ENCODE measurements at regions of chr6 and their contacts with region 1.

Region 1: DNA sequence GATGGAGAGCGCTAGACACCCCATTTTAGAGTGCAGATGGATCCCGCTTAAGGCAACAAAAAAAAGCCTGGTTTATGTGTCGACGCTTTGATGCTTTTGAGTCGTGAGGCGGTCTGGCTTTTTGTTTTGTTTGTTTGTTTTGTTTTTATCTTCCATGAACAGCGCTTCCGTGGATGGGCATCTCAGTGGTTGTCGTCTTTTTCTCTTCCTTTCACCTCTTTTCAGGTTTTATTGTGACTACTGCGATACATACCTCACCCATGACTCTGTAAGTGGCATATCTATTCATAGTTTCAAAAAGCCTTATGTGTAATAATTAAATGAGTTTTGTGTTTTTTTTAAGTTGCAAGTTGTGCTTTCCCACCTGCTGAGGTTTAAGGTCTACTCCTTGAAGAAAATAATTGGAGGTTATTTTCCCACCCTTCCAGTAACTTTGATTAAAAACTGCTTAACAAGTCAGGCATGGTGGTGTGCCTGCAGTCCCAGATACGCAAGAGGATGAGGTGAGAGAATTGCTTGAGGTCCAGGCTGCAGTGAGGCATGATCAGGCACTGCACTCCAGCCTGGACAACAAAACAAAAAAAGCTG is 476 bp downstream of the SNRPC start:
- DNase-seq: no peak
- H3K4me3 Mint-ChIP-seq: no peak overlapping the region
- H3K27ac Mint-ChIP-seq: no peak overlapping the region
- H3K4me1 Mint-ChIP-seq: peaks cover 7% of the 10 kb centered on the region
- H3K27me3 Mint-ChIP-seq: no peaks in the 10 kb centered on the region

Region 2: DNA sequence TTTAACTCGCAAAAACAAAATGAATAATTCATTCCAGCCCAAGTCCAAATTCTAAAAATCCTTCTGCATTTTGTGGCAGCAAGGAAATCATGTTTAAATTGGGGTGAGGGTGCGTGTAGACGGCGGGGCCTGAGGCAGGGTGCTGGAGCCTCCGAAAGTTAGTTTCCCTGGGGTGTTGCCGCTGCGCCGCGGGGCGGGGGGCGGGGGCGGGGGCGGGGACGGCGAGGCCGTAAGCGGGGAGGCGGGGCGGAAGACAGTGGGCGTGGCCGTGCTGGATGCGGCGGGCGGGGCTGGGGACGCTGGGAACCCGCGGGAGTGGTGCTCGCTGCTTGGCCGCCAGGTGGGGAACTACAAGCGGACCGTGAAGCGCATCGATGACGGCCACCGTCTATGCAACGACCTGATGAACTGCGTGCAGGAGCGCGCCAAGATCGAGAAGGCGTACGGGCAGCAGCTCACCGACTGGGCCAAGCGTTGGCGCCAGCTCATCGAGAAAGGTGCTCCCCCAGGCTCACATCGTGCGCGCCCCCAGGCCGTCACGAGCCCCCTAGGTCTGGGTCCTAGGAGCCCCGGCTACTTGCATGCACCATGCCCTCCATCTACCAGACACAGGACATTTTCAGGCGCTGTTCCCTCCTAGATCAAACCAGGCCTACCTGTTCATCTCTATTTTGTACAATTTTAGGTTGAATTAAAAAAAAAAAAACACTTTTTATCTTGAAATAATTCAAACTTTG is 230.6 kb before region 1 on chr6:
- intact Hi-C with region 1: loop called (anchors 1 kb)
- DNase-seq: peak; percentile 91
- H3K4me3 Mint-ChIP-seq: peak overlapping the region; percentile 6
- H3K27ac Mint-ChIP-seq: no peak overlapping the region
- H3K4me1 Mint-ChIP-seq: no peaks in the 10 kb centered on the region
- H3K27me3 Mint-ChIP-seq: peaks cover 6% of the 10 kb centered on the region

Region 3: GRCh38 chr6:34671801-34672656 is 85.8 kb before region 1 on chr6:
- intact Hi-C with region 1: loop called (anchors 2 kb)
- DNase-seq: peak; percentile 80
- H3K4me3 Mint-ChIP-seq: peak overlapping the region; percentile 69
- H3K27ac Mint-ChIP-seq: peak overlapping the region; percentile 97
- H3K4me1 Mint-ChIP-seq: peaks cover 63% of the 10 kb centered on the region
- H3K27me3 Mint-ChIP-seq: no peaks in the 10 kb centered on the region

Region 4: GRCh38 chr6:34791701-34792235 is 34.0 kb after region 1 on chr6 and contains the start of gene BLTP3A:
- intact Hi-C with region 1: loop called (anchors 1 kb)
- DNase-seq: peak; percentile 76
- H3K4me3 Mint-ChIP-seq: peak within 1 kb of the TSS; percentile 99
- H3K27ac Mint-ChIP-seq: peak within 1 kb of the TSS; percentile 97
- H3K4me1 Mint-ChIP-seq: peaks cover 29% of the 10 kb centered on the region
- H3K27me3 Mint-ChIP-seq: no peaks in the 10 kb centered on the region
- total RNA-seq, gene BLTP3A: 17.2 and 17.8 TPM in 2 replicates